ENCODE measurements at regions of chr14 and their contacts with region 1.

Region 1: DNA sequence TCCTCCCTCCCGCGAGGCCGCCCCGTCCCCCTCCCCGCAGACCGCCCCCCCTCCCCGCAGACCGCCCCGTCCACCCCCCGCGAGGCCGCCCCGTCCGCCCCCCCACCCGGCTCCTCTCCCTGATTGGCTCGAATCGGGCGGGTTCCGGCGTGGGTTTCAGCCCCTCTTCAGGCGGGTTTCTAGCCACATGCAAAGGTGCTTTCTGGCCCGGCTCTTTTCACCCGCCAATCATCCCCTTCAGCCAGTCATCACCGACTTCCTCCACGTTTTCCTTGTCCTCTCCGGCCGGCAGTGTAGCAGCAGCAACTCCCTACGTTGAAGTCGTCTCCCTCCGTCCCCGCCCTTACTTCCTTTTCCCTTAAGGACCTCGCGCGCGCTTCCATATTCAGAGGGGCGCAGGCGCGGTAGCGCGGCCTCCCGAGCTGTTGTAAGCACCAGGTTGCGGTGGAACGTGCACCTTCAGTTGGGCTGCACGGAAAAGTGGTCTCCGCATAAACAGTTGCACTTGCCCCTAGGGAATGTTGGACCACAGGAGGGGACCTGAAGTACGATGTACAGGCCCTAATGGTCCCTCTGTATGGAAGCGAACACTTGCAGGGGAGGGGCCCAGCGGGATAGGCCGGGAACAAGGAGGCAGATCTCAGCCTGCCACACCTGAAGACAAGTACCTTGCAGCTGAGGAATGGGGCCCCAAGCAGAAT is 44.6 kb upstream of the ESR2 start:
- DNase-seq: peak; percentile 82 to 99 (median 95)

Region 2: GRCh38 chr14:64292197-64292596 is 46.6 kb before region 1 on chr14:
- intact Hi-C with region 1: no loop called
- DNase-seq: no peak

Region 3: GRCh38 chr14:64349741-64350490 is 11.2 kb after region 1 on chr14:
- intact Hi-C with region 1: no loop called
- DNase-seq: no peak

Region 4: GRCh38 chr14:64387694-64388532 is 49.1 kb after region 1 on chr14 and contains the start of gene MTHFD1:
- intact Hi-C with region 1: loop called (anchors 2 kb)
- DNase-seq: peak; percentile 94 to 99 (median 97)

Region 5: GRCh38 chr14:64478634-64479250 is 140.0 kb after region 1 on chr14:
- intact Hi-C with region 1: loop called (anchors 10 kb)
- DNase-seq: peak in 1 of 42 donors; percentile 20

Region 6: DNA sequence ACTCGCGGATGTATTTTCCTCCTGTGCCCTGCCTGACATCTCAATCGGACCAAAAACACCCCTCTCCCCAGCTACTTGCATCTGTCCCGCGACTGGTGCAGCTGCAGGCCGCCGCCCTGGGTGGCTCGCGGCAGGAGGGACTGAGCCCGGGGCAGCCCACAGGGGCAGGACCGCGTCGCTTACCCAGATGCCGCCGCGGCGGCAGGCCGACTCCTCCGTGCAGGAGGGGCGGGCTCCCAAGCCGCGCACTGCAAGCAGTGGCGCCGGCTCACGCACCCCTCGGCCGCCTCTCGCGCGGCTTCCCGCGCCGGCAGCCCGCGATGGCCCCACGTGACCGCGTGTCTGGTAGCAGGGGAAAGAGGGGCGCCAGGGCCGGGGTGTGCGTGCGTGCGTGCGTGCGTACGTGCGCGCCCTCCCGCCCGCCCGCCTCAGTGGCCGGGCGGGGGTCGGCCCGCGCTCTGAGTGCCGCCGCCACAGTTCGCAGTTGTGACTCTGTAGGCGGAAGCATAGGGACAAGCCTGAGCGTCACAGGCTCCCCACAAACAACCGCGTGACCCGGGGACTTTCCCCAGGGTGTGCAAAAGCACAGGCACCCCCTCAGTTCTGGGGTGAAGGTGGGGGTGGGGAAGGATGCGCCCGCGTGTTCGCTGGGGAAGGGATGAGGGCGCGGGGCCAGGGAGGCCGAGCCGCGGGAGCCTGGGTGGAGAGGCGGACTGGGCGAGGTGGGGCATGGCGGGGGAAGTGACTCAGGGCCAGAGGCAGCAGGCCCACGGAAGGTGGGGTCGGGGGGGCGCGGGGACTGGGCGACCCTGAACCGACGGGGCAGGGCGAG is 164.9 kb after region 1 on chr14 and contains the start of gene ZBTB25:
- intact Hi-C with region 1: loop called (anchors 10 kb)
- DNase-seq: peak; percentile 76 to 97 (median 92)

Region 7: GRCh38 chr14:65006261-65006721 is 667.5 kb after region 1 on chr14:
- intact Hi-C with region 1: no loop called
- DNase-seq: no peak